Activated CD4-positive, alpha-beta memory T cell treated with anti-CD3 and anti-CD28 coated beads for 36 hours (primary cell): ENCODE measurements at regions of chr2 and their contacts with region 1.

Region 1: GRCh38 chr2:231713730-231714430 is 5.6 kb downstream of the PTMA start:
- DNase-seq: peak; percentile 94
- H3K4me3 Mint-ChIP-seq: peak overlapping the region; percentile 48
- H3K27ac Mint-ChIP-seq: peak overlapping the region; percentile 95
- H3K4me1 Mint-ChIP-seq: peaks cover 23% of the 10 kb centered on the region
- H3K27me3 Mint-ChIP-seq: no peaks in the 10 kb centered on the region

Region 2: GRCh38 chr2:231563378-231563961 is 150.4 kb before region 1 on chr2:
- CTCF ChIA-PET with region 1: interaction called, 4 read pairs
- POLR2A ChIA-PET with region 1: no interaction called
- intact Hi-C with region 1: loop called (anchors 2 kb)
- DNase-seq: peak; percentile 71
- H3K4me3 Mint-ChIP-seq: no peak overlapping the region
- H3K27ac Mint-ChIP-seq: no peak overlapping the region
- H3K4me1 Mint-ChIP-seq: peaks cover under 1% of the 10 kb centered on the region
- H3K27me3 Mint-ChIP-seq: peaks cover 1% of the 10 kb centered on the region

Region 3: DNA sequence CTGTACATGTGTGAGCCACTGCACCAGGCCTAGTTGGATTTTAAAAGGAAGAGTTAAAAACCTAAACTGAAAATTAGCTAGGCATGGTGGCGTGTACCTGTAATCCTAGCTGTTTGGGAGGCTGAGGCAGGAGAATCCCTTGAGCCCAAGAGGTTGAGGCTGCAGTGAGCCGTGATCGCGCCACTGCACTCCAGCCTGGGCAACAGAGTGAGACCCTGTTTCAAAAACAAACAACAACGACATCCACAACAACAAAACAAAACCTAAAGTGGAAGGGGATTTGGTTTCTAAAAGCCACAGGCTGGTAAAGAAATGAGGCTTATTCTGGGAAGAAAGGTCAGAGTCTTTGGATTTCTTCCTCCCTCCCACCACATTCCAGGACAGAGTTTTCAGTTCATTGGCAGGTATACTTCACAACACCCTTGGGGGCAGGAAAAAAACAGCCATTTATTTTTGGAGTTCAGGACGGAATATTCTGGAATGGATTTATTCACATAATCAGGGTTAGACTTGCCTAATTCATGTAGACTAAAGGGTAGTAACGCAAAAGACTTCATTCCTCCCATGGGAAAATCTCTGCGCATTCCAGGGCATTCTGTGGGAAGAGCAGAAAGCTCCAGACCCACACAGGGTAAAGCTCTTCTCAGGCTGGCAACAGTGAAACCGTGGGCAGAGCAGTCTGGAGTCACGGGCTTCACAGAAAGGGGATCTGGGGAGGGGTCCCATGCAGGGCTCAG is 86.3 kb before region 1 on chr2:
- CTCF ChIA-PET with region 1: interaction called, 10 read pairs
- POLR2A ChIA-PET with region 1: interaction called, 3 read pairs
- intact Hi-C with region 1: no loop called
- DNase-seq: no peak
- H3K4me3 Mint-ChIP-seq: no peak overlapping the region
- H3K27ac Mint-ChIP-seq: no peak overlapping the region
- H3K4me1 Mint-ChIP-seq: peaks cover 7% of the 10 kb centered on the region
- H3K27me3 Mint-ChIP-seq: no peaks in the 10 kb centered on the region

Region 4: GRCh38 chr2:231674587-231675338 is 39.1 kb before region 1 on chr2:
- CTCF ChIA-PET with region 1: interaction called, 578 read pairs
- POLR2A ChIA-PET with region 1: interaction called, 17 read pairs
- intact Hi-C with region 1: loop called (anchors 1 kb)
- DNase-seq: peak; percentile 74
- H3K4me3 Mint-ChIP-seq: no peak overlapping the region
- H3K27ac Mint-ChIP-seq: no peak overlapping the region
- H3K4me1 Mint-ChIP-seq: peaks cover 9% of the 10 kb centered on the region
- H3K27me3 Mint-ChIP-seq: no peaks in the 10 kb centered on the region

Region 5: DNA sequence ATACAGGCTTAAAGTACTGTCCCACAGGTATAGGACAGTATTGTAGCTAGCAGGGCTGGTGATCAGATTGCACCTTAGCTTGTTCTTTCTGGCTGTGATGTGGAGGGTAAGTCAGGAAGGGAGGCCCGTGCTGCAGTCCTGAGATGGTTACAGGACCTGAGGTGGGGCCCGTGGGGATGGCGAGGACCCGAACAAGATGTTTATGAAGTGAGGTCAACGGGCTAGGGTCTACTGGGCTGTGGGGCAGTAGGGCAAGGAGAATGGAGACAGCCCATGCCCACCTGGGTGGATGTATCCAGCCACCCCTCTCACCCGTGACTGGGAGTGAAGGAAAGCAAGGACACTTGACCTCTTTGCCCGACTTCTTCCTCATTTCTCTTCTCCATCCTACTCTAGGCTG is 12.3 kb after region 1 on chr2:
- CTCF ChIA-PET with region 1: interaction called, 41 read pairs
- POLR2A ChIA-PET with region 1: interaction called, 3 read pairs
- intact Hi-C with region 1: no loop called
- DNase-seq: no peak
- H3K4me3 Mint-ChIP-seq: no peak overlapping the region
- H3K27ac Mint-ChIP-seq: no peak overlapping the region
- H3K4me1 Mint-ChIP-seq: no peaks in the 10 kb centered on the region
- H3K27me3 Mint-ChIP-seq: no peaks in the 10 kb centered on the region

Region 6: DNA sequence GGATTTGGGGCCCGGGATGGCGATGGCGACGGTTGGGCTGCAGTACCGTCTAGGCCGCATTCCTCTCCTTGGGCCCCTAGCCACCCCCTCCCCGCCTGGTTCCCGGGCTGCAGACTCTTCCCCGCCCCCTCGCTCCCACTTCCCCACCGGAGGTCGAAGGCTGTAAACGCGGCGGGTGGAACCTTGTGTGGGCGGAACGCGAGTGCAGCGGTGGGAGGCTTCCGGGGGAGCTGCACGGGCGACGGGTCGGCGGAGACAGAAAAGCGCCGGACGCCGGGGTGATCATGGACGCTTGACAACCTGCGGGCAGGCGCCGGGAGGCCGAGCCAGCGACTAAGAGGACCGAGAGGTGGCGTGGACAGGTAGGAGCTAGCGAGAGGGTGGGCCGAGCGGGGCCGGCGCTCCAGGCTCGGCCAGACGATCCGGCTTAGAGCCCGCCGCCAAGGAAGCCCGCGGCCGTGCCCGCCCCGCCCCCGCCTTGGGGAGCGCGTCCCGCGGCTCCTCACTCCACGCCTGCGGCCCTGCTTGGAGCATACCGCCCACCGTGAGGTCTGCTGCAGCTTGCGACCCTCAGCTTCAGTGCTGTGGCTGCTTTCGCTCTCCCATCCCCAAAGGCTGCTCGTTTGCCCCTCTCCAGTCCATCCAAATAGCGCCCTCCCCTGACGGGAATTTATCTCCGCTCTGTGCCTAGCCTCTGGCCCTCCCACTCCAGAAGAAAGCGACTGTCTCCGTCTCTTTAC is 72.5 kb after region 1 on chr2 and contains the start of gene COPS7B:
- CTCF ChIA-PET with region 1: interaction called, 18 read pairs
- POLR2A ChIA-PET with region 1: interaction called, 5 read pairs
- intact Hi-C with region 1: loop called (anchors 1 kb)
- DNase-seq: peak; percentile 91
- H3K4me3 Mint-ChIP-seq: peak within 1 kb of the TSS; percentile 79
- H3K27ac Mint-ChIP-seq: peak within 1 kb of the TSS; percentile 88
- H3K4me1 Mint-ChIP-seq: peaks cover 67% of the 10 kb centered on the region
- H3K27me3 Mint-ChIP-seq: no peaks in the 10 kb centered on the region
- total RNA-seq, gene COPS7B: 47.1 to 50.6 TPM